HEK293 (cell line): ENCODE measurements at regions of chr1 and their contacts with region 1.

Region 1: DNA sequence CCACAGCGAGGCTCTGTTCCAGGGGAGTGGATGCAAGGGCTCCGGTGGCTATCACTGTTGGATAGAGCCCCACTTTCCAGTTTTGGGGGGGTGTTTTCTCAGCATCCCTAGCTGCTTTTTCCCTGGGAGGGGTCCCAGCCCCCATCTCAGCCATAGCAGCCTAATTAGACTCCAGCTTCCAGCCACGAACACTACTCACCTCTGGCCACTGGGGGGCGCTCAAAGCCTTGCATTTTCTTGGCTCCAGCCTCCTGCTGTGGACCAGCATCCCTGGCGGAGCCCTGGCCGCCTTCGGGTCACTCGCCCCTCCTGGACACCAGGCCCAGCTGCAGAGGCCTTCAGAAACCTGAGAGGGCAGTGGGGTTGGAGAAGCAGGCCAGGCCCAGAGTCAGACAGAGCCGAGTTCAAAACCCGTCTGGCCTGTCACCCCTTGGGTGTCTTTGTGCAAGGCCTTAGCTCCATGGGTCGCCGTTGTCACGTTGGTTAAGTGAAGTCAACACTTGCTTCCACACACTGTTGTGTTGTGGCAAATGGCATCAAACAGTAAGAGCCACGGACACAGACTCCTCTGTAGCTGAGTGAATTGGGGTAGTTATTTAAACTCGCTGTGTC is 93.5 kb upstream of the ACTL8 start:
- H3K4me3 ChIP-seq: no peak overlapping the region
- H3K27ac ChIP-seq: no peak overlapping the region
- H3K4me1 ChIP-seq: no peaks in the 10 kb centered on the region
- CTCF ChIP-seq: peak; percentile 79

Region 2: DNA sequence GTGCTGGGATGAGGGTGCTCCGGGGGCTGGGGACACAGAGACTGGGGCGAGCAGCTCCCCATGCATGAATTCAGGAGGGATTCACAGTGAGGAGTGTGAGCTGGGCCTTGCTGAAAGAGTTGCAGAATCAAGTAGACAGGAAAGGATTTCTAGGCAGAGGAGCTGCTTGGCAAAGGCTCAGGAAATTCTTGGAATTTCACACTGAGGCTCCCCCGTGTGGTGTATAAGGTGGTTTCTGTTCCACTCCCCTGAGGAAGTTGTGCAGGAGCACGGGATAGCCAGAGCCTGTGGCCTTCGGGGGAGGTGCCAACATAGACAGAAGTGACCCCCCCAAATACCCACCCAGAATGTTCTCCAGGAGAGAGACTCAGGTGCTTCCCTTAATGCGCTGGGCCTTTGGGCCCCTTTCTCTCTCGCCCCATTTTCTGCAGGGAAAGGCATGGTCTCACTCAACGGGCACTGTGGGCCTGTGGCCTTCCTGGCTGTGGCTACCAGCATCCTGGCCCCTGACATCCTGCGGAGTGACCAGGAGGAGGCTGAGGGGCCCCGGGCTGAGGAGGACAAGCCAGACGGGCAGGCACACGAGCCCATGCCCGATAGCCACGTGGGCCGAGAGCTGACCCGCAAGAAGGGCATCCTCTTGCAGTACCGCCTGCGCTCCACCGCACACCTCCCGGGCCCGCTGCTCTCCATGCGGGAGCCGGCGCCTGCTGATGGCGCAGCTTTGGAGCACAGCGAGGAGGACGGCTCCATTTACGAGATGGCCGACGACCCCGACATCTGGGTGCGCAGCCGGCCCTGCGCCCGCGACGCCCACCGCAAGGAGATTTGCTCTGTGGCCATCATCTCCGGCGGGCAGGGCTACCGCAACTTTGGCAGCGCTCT is 35.0 kb after region 1 on chr1:
- CTCF ChIA-PET with region 1: interaction called, 19 read pairs
- POLR2A ChIA-PET with region 1: interaction called, 3 read pairs
- H3K4me3 ChIP-seq: no peak overlapping the region
- H3K27ac ChIP-seq: no peak overlapping the region
- H3K4me1 ChIP-seq: no peaks in the 10 kb centered on the region
- CTCF ChIP-seq: no peak

Region 3: DNA sequence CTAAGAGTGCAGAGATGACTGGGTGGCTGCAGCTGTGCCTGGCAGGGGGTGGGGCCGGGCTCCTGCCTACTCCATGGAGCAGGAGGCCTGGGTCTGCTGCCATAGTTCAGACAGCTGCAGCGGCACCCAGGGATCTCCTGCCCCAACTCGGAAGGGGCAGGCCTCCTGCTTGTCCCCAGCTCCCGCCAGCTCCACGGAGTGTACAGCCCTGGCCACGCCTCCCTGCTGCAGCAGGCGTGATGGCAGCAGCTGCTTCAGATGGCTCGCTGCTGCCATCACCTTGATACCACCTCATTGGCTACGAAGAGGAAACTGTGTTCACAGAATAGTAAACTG is 129.4 kb after region 1 on chr1:
- CTCF ChIA-PET with region 1: no interaction called
- POLR2A ChIA-PET with region 1: no interaction called
- H3K4me3 ChIP-seq: no peak overlapping the region
- H3K27ac ChIP-seq: no peak overlapping the region
- H3K4me1 ChIP-seq: no peaks in the 10 kb centered on the region
- CTCF ChIP-seq: no peak

Region 4: GRCh38 chr1:17810668-17811067 is 149.0 kb after region 1 on chr1:
- CTCF ChIA-PET with region 1: no interaction called
- POLR2A ChIA-PET with region 1: no interaction called
- H3K4me3 ChIP-seq: no peak overlapping the region
- H3K27ac ChIP-seq: no peak overlapping the region
- H3K4me1 ChIP-seq: no peaks in the 10 kb centered on the region
- CTCF ChIP-seq: no peak

Region 5: GRCh38 chr1:17826165-17826488 is 164.5 kb after region 1 on chr1:
- CTCF ChIA-PET with region 1: interaction called, 27 read pairs
- POLR2A ChIA-PET with region 1: no interaction called
- H3K4me3 ChIP-seq: no peak overlapping the region
- H3K27ac ChIP-seq: no peak overlapping the region
- H3K4me1 ChIP-seq: no peaks in the 10 kb centered on the region
- CTCF ChIP-seq: peak; percentile 38; the same call in 1 of the 2 replicates